ENCODE measurements at regions of chr12 and their contacts with region 1.

Region 1: GRCh38 chr12:99598785-99599184 is 48.8 kb upstream of the GARIN6 start:
- DNase-seq: no peak
- ATAC-seq: no peak
- H3K4me3 ChIP-seq: no peak overlapping the region
- H3K27ac ChIP-seq: no peak overlapping the region
- H3K4me1 ChIP-seq: no peaks in the 10 kb centered on the region
- H3K27me3 ChIP-seq: no peaks in the 10 kb centered on the region
- CTCF ChIP-seq: no peak
- POLR2A ChIP-seq: no peak

Region 2: GRCh38 chr12:99498756-99499155 is 100.0 kb before region 1 on chr12:
- in situ Hi-C with region 1: loop called in 1 of 4 experiments (anchors 25 kb)
- intact Hi-C with region 1: no loop called
- DNase-seq: no peak
- ATAC-seq: no peak
- H3K4me3 ChIP-seq: no peak overlapping the region
- H3K27ac ChIP-seq: no peak overlapping the region
- H3K4me1 ChIP-seq: no peaks in the 10 kb centered on the region
- H3K27me3 ChIP-seq: no peaks in the 10 kb centered on the region
- CTCF ChIP-seq: no peak
- POLR2A ChIP-seq: no peak